BJ (cell line): ENCODE measurements at regions of chr20 and their contacts with region 1.

Region 1: DNA sequence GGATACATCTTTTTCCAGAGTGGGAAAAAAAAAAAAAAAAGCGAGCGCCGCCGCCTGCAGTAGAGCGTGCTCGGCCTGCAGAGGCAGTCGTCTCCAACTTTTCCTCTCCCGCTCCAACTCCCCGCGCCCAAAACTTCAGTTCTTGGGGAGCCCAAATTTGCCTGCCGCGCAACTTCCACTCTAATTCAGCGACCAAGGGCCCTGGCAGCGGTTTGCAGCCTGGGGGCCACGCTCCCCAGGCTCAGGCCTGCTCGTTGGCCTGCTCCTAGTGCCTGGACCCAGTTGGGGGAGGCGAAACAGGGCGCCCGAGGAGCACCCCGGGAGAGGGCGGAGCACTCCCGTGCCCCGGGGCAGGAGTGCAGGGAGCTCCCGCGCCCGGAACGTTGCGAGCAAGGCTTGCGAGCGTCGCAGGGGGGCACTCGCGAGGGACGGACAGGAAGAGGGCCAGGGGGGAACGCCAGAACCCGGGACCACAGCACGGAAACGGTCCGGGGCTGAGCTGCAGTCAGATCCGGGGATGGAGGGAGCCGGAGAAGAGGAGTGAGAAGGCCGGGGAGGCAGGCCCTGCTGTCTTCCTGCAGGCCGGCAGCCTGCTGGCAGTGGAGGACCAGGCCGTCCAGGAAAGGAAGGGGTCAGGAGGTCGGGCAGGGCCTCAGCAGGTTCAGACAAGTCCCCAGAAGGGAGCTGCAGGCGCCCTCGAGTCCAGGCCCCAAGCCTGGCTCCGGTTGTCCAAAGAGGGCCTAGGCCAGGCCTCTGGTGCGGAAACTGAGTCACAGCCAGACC is at the start of gene STX16:
- DNase-seq: no peak
- H3K4me3 ChIP-seq: peak within 1 kb of the TSS; percentile 80
- H3K27me3 ChIP-seq: no peaks in the 10 kb centered on the region
- CTCF ChIP-seq: peak; percentile 58
- polyA plus RNA-seq, gene STX16: 39.7 and 45.5 TPM in 2 replicates

Region 2: GRCh38 chr20:57323034-57323433 is 1327.9 kb before region 1 on chr20:
- CTCF ChIA-PET with region 1: no interaction called
- POLR2A ChIA-PET with region 1: no interaction called
- DNase-seq: no peak
- H3K4me3 ChIP-seq: no peak overlapping the region
- H3K27me3 ChIP-seq: peaks cover 8% of the 10 kb centered on the region
- CTCF ChIP-seq: no peak

Region 3: DNA sequence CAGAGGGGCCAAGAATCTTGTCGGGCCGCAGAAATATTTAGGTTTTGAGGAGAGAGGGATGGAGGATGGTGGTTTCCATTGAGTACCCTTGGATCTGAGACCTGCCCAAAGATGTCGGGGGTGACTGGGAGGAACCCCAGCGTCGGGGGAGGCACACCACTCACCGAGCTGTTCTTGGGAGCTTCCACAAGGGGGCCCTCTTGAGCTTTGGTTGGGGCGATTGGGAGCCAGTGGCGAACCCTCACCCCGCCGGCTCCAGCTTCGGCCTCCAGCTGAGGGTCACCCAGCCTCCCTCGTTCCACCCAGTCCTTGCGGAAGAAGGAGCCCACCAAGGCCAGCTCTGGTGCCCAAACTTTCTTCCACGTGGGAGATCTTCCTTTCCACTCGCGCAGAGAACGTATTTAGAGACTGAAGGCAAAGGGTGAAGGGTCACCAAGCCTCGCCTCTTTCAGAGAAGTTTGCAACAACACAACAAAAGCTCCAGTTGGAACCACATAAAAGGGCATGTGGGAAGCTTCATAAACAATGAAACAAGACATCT is 169.4 kb before region 1 on chr20:
- CTCF ChIA-PET with region 1: interaction called, 42 read pairs
- POLR2A ChIA-PET with region 1: interaction called, 4 read pairs
- DNase-seq: no peak
- H3K4me3 ChIP-seq: no peak overlapping the region
- H3K27me3 ChIP-seq: no peaks in the 10 kb centered on the region
- CTCF ChIP-seq: peak; percentile 70

Region 4: GRCh38 chr20:58494923-58495622 is 155.9 kb before region 1 on chr20:
- CTCF ChIA-PET with region 1: no interaction called
- POLR2A ChIA-PET with region 1: interaction called, 11 read pairs
- DNase-seq: no peak
- H3K4me3 ChIP-seq: no peak overlapping the region
- H3K27me3 ChIP-seq: no peaks in the 10 kb centered on the region; the same call in 1 of the 2 replicates
- CTCF ChIP-seq: no peak

Region 5: GRCh38 chr20:58571693-58572427 is 79.1 kb before region 1 on chr20:
- CTCF ChIA-PET with region 1: no interaction called
- POLR2A ChIA-PET with region 1: no interaction called
- DNase-seq: no peak
- H3K4me3 ChIP-seq: no peak overlapping the region
- H3K27me3 ChIP-seq: peaks cover 4% of the 10 kb centered on the region
- CTCF ChIP-seq: no peak

Region 6: GRCh38 chr20:58634521-58635278 is 16.3 kb before region 1 on chr20:
- CTCF ChIA-PET with region 1: interaction called, 5 read pairs
- POLR2A ChIA-PET with region 1: interaction called, 13 read pairs
- DNase-seq: no peak
- H3K4me3 ChIP-seq: no peak overlapping the region
- H3K27me3 ChIP-seq: no peaks in the 10 kb centered on the region
- CTCF ChIP-seq: no peak

Region 7: GRCh38 chr20:58746620-58747019 is 95.7 kb after region 1 on chr20:
- CTCF ChIA-PET with region 1: no interaction called
- POLR2A ChIA-PET with region 1: no interaction called
- DNase-seq: no peak
- H3K4me3 ChIP-seq: no peak overlapping the region
- H3K27me3 ChIP-seq: peaks cover 3% of the 10 kb centered on the region
- CTCF ChIP-seq: no peak

Region 8: GRCh38 chr20:58886546-58886945 is 235.6 kb after region 1 on chr20:
- CTCF ChIA-PET with region 1: no interaction called
- POLR2A ChIA-PET with region 1: interaction called, 16 read pairs
- DNase-seq: no peak
- H3K4me3 ChIP-seq: no peak overlapping the region
- H3K27me3 ChIP-seq: no peaks in the 10 kb centered on the region
- CTCF ChIP-seq: no peak